OCI-LY7 (cell line): ENCODE measurements at regions of chr12 and their contacts with region 1.

Region 1: DNA sequence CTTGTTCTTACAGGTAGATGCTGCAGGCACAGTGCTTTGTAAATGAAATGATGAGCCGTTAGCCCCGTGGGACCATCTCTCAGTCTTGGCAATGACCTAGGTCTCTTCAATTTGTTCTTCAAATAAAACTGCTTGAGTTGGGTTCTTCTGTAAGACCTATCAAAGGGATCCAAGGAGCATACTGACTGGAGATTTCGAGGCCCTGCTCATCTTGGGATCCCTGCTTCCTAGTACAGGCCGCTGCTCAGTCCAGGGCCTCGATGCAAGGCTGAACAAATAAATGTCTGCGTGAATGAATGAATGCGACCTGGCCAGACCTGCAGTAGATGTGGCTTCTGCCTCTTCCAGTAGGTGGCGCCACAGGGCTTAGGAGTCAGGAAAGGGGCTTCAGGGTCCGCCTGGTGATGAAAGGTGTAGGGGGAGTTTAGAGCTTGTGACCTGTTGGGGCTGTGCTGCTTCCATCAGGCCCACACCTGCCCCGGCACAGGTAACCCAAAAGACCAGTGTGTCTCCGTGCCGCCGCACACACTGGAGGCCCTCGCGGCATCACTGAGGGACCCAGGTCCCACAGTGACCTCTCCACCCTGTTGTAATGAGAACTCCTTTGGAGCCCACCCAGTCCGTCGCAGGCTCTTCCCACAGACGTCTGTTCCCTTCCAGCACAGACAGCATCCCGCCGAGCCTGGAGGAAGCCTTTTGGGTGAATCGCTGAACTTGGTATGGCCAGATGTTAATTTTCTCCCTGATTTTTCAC is 4.4 kb downstream of the CACNA1C start:
- DNase-seq: peak; percentile 78
- H3K4me3 ChIP-seq: no peak overlapping the region
- H3K27ac ChIP-seq: no peak overlapping the region
- H3K4me1 ChIP-seq: no peaks in the 10 kb centered on the region
- CTCF ChIP-seq: peak; percentile 93

Region 2: GRCh38 chr12:2395354-2395977 is 338.2 kb after region 1 on chr12:
- CTCF ChIA-PET with region 1: no interaction called
- POLR2A ChIA-PET with region 1: no interaction called
- intact Hi-C with region 1: loop called (anchors 2 kb)
- DNase-seq: peak; percentile 56
- H3K4me3 ChIP-seq: no peak overlapping the region
- H3K27ac ChIP-seq: no peak overlapping the region
- H3K4me1 ChIP-seq: no peaks in the 10 kb centered on the region
- CTCF ChIP-seq: peak; percentile 94